Activated CD4-positive, alpha-beta memory T cell treated with anti-CD3 and anti-CD28 coated beads, Interleukin-2, amount 10 ng/mL, durations not matched to agents 7 days and 5 days (primary cell): ENCODE measurements at regions of chr19 and their contacts with region 1.

Region 1: GRCh38 chr19:45406226-45407090 is at the start of gene POLR1G:
- DNase-seq: peak; percentile 82
- H3K4me3 Mint-ChIP-seq: peak within 1 kb of the TSS; percentile 84
- H3K27ac Mint-ChIP-seq: peak within 1 kb of the TSS; percentile 79
- H3K4me1 Mint-ChIP-seq: peaks cover 46% of the 10 kb centered on the region
- H3K27me3 Mint-ChIP-seq: peaks cover 24% of the 10 kb centered on the region
- total RNA-seq, gene POLR1G: 3.6 to 3.8 TPM

Region 2: DNA sequence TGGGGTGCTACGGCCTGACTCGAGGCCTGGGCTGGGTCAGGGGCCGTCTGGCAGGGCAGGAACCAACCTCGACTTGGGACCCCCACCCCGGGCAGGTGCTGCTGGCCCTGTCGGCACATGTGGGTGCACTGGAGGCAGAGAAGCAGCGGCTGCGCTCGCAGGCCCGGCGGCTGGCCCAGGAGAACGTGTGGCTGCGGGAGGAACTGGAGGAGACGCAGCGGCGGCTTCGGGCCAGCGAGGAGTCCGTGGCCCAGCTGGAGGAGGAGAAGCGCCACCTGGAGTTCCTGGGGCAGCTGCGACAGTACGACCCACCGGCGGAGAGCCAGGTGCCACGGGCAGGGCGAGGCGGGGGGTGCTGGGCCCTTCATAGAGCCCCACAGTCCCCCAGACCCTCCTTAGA is 60.0 kb before region 1 on chr19:
- CTCF ChIA-PET with region 1: no interaction called
- POLR2A ChIA-PET with region 1: no interaction called
- DNase-seq: no peak
- H3K4me3 Mint-ChIP-seq: no peak overlapping the region
- H3K27ac Mint-ChIP-seq: no peak overlapping the region
- H3K4me1 Mint-ChIP-seq: no peaks in the 10 kb centered on the region
- H3K27me3 Mint-ChIP-seq: peaks cover 8% of the 10 kb centered on the region

Region 3: GRCh38 chr19:45380107-45380506 is 26.4 kb before region 1 on chr19:
- CTCF ChIA-PET with region 1: no interaction called
- POLR2A ChIA-PET with region 1: no interaction called
- DNase-seq: no peak
- H3K4me3 Mint-ChIP-seq: no peak overlapping the region
- H3K27ac Mint-ChIP-seq: no peak overlapping the region
- H3K4me1 Mint-ChIP-seq: peaks cover 4% of the 10 kb centered on the region
- H3K27me3 Mint-ChIP-seq: peaks cover 4% of the 10 kb centered on the region

Region 4: GRCh38 chr19:45391871-45392665 is 14.4 kb before region 1 on chr19:
- CTCF ChIA-PET with region 1: interaction called, 13 read pairs
- POLR2A ChIA-PET with region 1: no interaction called
- DNase-seq: no peak
- H3K4me3 Mint-ChIP-seq: no peak overlapping the region
- H3K27ac Mint-ChIP-seq: no peak overlapping the region
- H3K4me1 Mint-ChIP-seq: no peaks in the 10 kb centered on the region
- H3K27me3 Mint-ChIP-seq: peaks cover 16% of the 10 kb centered on the region

Region 5: DNA sequence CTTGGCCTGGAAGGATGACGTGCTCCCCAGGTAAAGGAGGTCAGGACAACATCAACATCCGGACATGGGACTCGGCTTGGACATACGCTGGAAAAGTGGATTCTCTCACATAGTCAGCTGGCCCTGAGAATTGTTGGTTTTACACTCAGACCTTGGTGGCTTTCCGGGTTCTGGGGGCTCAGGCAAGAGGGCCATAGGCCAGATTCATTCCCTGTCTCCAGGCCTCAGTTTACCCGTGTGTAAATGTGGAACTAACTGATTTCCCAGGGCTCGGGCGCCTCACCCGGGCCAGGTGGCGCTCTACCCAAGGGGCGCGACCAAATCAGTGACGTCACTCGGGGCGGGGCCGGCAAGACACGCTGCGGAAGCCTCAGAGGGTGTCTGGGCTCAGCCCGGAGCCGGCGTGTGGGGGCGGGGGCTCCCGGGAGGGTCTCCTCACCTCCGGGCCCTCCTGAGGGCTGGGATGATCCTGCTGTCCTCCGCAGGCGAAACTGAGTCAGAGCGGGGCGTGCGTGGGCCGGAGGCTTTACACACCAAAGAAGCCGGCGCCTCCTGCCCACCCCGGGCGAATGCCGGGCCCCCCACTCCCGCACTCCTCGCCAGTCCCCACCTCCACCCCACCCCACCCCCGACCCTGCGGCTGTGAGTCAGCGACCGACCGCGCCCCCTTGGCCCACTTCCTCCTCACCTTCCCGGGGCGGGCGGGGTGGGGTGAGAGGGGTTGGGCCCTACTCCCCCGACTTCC is 100.0 kb after region 1 on chr19:
- CTCF ChIA-PET with region 1: no interaction called
- POLR2A ChIA-PET with region 1: no interaction called
- DNase-seq: peak; percentile 97
- H3K4me3 Mint-ChIP-seq: peak overlapping the region; percentile 83
- H3K27ac Mint-ChIP-seq: peak overlapping the region; percentile 96
- H3K4me1 Mint-ChIP-seq: peaks cover 47% of the 10 kb centered on the region
- H3K27me3 Mint-ChIP-seq: no peaks in the 10 kb centered on the region